ENCODE measurements at regions of chr15 and their contacts with region 1.

Region 1: GRCh38 chr15:98873441-98874201 is 134.0 kb downstream of the PGPEP1L start:
- DNase-seq: no peak
- H3K4me3 ChIP-seq: peak overlapping the region in 1 of 2 donors; percentile 28
- H3K27ac ChIP-seq: peak overlapping the region; percentile 65 to 86
- H3K4me1 ChIP-seq: peaks cover 25 to 69% of the 10 kb centered on the region in 2 donors
- H3K27me3 ChIP-seq: no peaks in the 10 kb centered on the region
- CTCF ChIP-seq: no peak

Region 2: DNA sequence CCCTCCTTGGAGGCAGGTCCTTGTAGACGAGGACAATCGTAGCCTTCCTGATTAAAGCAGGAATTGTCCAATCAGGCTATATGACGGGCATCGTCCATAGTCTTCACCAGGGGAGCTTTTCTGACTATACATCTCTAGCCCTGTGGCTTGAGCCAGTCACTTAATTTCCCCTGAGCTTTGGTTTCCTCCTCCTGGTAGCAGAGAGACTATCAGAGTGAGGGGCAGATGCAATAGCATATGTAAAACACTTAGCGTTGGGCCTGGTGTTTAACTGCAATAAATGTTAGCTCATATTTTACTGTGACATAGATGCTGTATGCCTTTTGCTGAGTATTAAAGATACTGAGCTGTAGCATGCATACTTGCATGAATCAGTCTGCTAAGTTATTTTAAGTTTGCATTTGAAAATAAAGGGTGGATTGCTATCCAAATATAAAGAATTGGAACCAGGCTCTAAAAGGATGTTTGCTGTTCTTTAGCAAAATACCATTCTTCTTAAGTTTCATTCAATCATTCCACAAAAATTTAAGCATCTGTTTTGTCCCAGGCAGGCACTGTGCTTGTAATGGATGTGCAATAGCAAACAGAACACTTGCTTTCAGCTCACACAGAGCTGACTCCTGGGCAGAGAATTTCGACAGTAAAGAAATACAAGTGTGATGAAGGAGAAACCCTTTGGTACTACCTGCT is 17.3 kb before region 1 on chr15:
- intact Hi-C with region 1: loop called (anchors 2 kb)
- DNase-seq: no peak
- H3K4me3 ChIP-seq: peak overlapping the region in 1 of 2 donors; percentile 6
- H3K27ac ChIP-seq: peak overlapping the region; percentile 92
- H3K4me1 ChIP-seq: peaks cover 45 to 80% of the 10 kb centered on the region in 2 donors
- H3K27me3 ChIP-seq: no peaks in the 10 kb centered on the region
- CTCF ChIP-seq: no peak

Region 3: GRCh38 chr15:98946301-98947255 is 73.0 kb after region 1 on chr15:
- intact Hi-C with region 1: loop called (anchors 5 kb)
- DNase-seq: peak; percentile 57 to 89
- H3K4me3 ChIP-seq: no peak overlapping the region
- H3K27ac ChIP-seq: peak overlapping the region; percentile 93 to 95
- H3K4me1 ChIP-seq: peaks cover 0 to 40% of the 10 kb centered on the region in 2 donors
- H3K27me3 ChIP-seq: no peaks in the 10 kb centered on the region
- CTCF ChIP-seq: no peak